ENCODE measurements at regions of chr21 and their contacts with region 1.

Region 1: GRCh38 chr21:26170471-26171257 is at the start of gene APP:
- DNase-seq: peak in 1 of 2 experiments; percentile 97
- H3K4me3 ChIP-seq: peak within 1 kb of the TSS; percentile 65 to 96 (median 94)
- H3K27ac ChIP-seq: peak within 1 kb of the TSS; percentile 78
- H3K4me1 ChIP-seq: peaks cover 11 to 20% (median 12%) of the 10 kb centered on the region in 4 experiments; a peak in 6 of 7 replicates
- H3K27me3 ChIP-seq: peaks cover 0 to 7% (median 3%) of the 10 kb centered on the region in 4 experiments; a peak in 3 of 7 replicates
- CTCF ChIP-seq: peak; percentile 75 to 80 (median 77)
- EP300 ChIP-seq: peak in 1 of 2 experiments; percentile 60; a peak in 1 of 3 replicates
- POLR2A ChIP-seq: peak; percentile 88
- RAD21 ChIP-seq: peak; percentile 54 to 73
- total RNA-seq, gene APP: 544 and 551 TPM in 2 replicates

Region 2: GRCh38 chr21:26148079-26148839 is 22.4 kb before region 1 on chr21:
- CTCF ChIA-PET with region 1: interaction called, 3 read pairs
- POLR2A ChIA-PET with region 1: interaction called, 115 read pairs
- DNase-seq: no peak
- H3K4me3 ChIP-seq: peak overlapping the region in 1 of 4 experiments; percentile 14; a peak in 1 of 8 replicates
- H3K27ac ChIP-seq: no peak overlapping the region
- H3K4me1 ChIP-seq: peaks cover 0 to 20% (median 15%) of the 10 kb centered on the region in 4 experiments; a peak in 5 of 7 replicates
- H3K27me3 ChIP-seq: no peaks in the 10 kb centered on the region
- CTCF ChIP-seq: no peak
- EP300 ChIP-seq: no peak
- POLR2A ChIP-seq: no peak
- RAD21 ChIP-seq: no peak

Region 3: DNA sequence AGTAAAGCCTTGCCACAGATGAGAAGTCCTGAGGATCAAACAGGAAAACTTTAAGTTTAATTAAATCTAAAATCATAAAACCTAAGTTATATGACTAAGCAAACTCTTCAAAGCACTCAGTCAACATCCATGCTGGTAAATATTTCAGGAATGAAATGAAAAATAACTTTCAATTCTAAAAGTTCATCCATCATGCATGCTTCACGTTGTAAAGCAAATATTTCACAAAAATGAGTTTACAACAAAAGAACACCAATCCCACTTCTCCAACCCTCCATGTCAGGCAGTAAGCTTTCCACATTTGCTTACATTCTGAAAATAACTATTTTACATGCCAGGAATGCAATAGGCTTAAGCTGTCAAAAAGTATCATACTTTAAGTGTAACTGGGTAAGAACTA is 16.9 kb before region 1 on chr21:
- CTCF ChIA-PET with region 1: interaction called, 46 read pairs
- POLR2A ChIA-PET with region 1: interaction called, 115 read pairs
- DNase-seq: no peak
- H3K4me3 ChIP-seq: no peak overlapping the region
- H3K27ac ChIP-seq: no peak overlapping the region
- H3K4me1 ChIP-seq: peaks cover 2 to 22% (median 14%) of the 10 kb centered on the region in 4 experiments; a peak in 5 of 7 replicates
- H3K27me3 ChIP-seq: no peaks in the 10 kb centered on the region
- CTCF ChIP-seq: no peak
- EP300 ChIP-seq: no peak
- POLR2A ChIP-seq: no peak
- RAD21 ChIP-seq: no peak